ENCODE measurements at regions of chr10 and their contacts with region 1.

Region 1: GRCh38 chr10:35336084-35336831 is at the start of gene CCNY:
- DNase-seq: peak; percentile 81
- H3K4me3 Mint-ChIP-seq: peak within 1 kb of the TSS; percentile 85
- H3K27ac Mint-ChIP-seq: peak within 1 kb of the TSS; percentile 87
- H3K4me1 Mint-ChIP-seq: peaks cover 71% of the 10 kb centered on the region
- H3K27me3 Mint-ChIP-seq: no peaks in the 10 kb centered on the region
- total RNA-seq, gene CCNY: 31.2 to 32.1 TPM

Region 2: DNA sequence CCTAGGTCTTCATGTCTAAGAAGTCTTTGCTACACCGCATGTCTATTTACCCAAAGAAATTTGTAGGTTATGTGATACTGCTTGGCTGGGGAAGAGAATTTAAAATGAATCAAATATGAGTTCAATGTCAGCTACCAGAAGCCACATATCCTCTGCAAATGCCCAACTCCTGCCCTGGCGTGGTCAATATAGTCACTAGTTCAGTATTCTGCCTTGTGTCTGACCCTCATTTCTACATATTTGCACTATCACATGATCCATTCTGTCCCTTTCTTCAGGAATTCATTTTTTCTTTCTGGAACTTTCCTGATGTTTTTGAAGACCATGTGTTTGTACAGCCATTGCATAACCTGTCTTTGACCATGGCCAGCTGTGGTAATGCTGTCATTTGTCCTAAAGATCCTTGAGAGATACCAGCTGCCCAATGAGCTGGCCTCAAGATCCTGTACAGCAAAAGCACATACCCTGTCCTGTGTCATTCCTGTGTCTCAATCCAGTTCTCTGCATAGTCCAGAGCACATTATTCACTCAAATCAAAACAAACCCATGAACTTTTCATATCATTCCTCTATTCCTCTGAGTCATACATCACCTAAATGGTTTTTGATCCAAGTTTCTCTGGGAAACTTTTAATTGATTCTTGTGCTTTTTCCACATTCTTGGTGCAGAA is 1045.7 kb before region 1 on chr10:
- CTCF ChIA-PET with region 1: no interaction called
- intact Hi-C with region 1: loop called (anchors 5 kb)
- DNase-seq: no peak
- H3K4me3 Mint-ChIP-seq: no peak overlapping the region
- H3K27ac Mint-ChIP-seq: no peak overlapping the region
- H3K4me1 Mint-ChIP-seq: peaks cover 31% of the 10 kb centered on the region
- H3K27me3 Mint-ChIP-seq: peaks cover 28% of the 10 kb centered on the region

Region 3: DNA sequence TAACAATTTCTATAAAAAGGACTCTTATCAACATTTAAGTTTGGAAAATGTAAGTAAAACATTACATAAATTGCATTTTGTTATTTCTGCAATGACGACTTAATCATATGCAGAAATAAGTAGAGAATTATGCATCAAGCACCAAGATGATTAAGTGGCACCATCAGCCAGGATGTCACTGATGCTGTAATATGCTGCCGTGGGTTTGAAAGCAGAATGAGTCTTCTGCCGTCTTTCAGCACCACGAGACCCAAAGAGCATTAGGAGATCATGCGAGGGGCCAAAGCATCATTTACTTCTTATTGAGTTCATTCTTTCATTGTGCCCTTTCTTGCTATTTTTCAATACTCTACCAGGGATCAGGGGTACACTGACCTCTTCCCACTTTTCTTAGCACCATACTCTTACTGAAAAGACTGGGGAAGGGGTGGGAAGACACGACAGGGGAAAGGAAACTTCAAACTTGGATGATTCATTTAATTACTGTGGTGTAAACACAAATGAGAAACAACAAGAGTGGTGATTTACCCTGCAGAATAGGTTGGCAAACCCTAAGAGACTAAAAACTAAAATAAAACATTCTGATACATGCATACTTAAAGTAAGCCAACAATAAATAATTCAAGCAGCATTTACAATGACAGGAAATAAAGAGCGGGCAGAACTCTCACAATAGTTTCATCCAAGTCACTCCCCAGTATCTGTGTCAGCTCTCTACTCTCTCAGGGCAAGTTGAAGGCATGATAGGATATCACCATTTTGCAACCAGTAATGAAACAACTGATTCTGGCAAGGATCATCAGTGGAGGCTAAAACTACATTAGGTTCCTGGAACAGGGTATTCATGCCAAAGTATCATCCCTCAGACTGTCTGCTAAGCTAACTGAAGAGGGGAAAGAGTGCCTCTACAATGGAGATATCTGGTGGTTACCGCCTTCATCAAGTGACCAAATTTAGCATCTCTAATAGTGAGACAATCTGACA is 316.9 kb before region 1 on chr10:
- CTCF ChIA-PET with region 1: no interaction called
- intact Hi-C with region 1: loop called (anchors 5 kb)
- DNase-seq: no peak
- H3K4me3 Mint-ChIP-seq: no peak overlapping the region
- H3K27ac Mint-ChIP-seq: no peak overlapping the region
- H3K4me1 Mint-ChIP-seq: peaks cover 13% of the 10 kb centered on the region
- H3K27me3 Mint-ChIP-seq: no peaks in the 10 kb centered on the region

Region 4: GRCh38 chr10:35058134-35058533 is 278.1 kb before region 1 on chr10:
- CTCF ChIA-PET with region 1: no interaction called
- intact Hi-C with region 1: no loop called
- DNase-seq: no peak
- H3K4me3 Mint-ChIP-seq: no peak overlapping the region
- H3K27ac Mint-ChIP-seq: no peak overlapping the region
- H3K4me1 Mint-ChIP-seq: peaks cover 3% of the 10 kb centered on the region
- H3K27me3 Mint-ChIP-seq: no peaks in the 10 kb centered on the region

Region 5: DNA sequence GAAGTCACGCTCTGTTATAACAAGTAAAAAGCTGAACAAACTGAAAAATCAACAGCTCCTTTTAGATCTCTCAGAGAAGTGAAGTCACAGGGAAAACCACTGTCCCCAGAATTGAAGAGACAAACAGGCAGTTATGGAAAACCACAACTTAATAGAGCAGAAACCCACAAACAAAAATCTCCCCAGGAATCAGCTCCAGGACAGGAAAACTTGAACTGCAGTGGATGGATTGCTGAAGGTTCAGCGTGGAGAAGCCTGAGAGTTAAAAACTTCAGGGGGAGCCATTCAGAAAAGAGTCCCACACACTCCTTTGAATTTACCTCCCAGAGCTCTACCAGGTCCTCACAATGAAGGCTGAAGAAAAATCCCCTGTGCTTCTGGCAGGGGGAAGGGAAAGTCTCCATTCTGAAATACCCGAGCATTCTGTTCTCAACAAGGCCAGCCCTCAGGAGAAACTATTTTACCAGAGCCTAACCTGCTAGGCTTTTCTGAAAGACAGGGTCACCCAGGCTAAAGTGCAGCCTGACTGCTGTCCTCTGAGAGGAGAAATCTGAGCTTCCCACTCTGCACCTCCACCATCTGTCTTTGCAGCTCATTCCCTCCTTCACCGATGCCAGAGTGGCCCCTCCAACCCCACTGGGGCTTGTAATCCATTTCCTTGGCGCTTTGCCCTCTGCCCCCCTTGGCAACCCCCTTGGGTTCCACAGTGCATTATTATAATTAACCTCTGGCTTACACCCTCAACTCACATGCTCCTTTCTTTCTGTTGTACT is 65.0 kb before region 1 on chr10:
- CTCF ChIA-PET with region 1: no interaction called
- intact Hi-C with region 1: loop called (anchors 1 kb)
- DNase-seq: no peak
- H3K4me3 Mint-ChIP-seq: no peak overlapping the region
- H3K27ac Mint-ChIP-seq: no peak overlapping the region
- H3K4me1 Mint-ChIP-seq: peaks cover 17% of the 10 kb centered on the region
- H3K27me3 Mint-ChIP-seq: peaks cover 3% of the 10 kb centered on the region

Region 6: DNA sequence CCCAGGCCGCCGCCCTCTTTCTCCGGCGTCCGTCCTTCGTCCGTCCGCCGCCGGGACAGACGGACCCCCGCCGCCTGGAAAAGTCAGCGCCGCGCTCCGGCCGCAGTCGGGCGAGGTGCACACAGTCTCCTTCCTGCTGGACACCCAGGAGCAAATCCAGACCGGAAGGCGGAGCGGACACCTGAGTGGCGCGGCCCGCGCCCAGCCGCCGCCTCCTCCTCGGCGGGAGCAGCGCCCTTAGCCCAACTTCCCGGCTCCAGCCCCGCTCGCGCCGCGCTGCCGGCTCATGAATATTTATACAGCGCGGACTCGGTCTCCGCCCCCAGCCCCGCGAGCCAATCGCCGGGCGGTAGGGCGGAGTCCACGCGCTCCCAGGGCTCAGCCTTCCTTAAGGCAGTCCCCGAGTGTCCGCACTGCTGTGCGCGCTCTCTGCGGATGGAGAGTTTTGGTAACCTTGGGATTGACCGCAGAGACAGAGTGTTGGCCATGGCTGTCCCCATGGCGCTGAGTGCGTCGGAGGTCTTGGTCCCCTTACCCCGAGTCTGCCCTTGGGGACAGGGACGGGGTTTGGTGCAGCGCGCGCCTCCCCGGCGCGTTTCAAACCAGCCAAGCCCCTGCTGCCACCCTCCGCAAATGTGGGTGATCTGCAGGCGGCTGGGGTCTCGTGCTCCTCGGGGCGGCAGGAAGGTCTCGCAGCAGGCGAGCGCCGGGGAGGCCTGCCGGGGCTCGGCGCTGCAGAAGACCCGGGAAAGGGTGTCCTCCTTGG is 306.0 kb after region 1 on chr10 and contains the start of gene FZD8:
- CTCF ChIA-PET with region 1: no interaction called
- intact Hi-C with region 1: loop called (anchors 5 kb)
- DNase-seq: peak; percentile 75
- H3K4me3 Mint-ChIP-seq: peak within 1 kb of the TSS; percentile 78
- H3K27ac Mint-ChIP-seq: no peak within 1 kb of the TSS
- H3K4me1 Mint-ChIP-seq: peaks cover 19% of the 10 kb centered on the region
- H3K27me3 Mint-ChIP-seq: peaks cover 41% of the 10 kb centered on the region
- total RNA-seq, gene FZD8: 0.15 to 0.19 TPM